Gastrocnemius medialis (tissue), 4 donors: ENCODE measurements at regions of chr21 and their contacts with region 1.

Region 1: GRCh38 chr21:43775795-43776430 is at the start of gene CSTB:
- DNase-seq: peak; percentile 69 to 71
- ATAC-seq: peak; percentile 91
- H3K4me3 ChIP-seq: peak within 1 kb of the TSS; percentile 76 to 99 (median 91)
- H3K27ac ChIP-seq: peak within 1 kb of the TSS; percentile 75 to 94 (median 86)
- H3K4me1 ChIP-seq: peaks cover 14 to 15% of the 10 kb centered on the region in 2 donors
- H3K27me3 ChIP-seq: no peaks in the 10 kb centered on the region
- CTCF ChIP-seq: no peak
- POLR2A ChIP-seq: peak; percentile 61 to 70
- total RNA-seq, gene CSTB: 1.3 to 5.9 (median 5.2) TPM

Region 2: GRCh38 chr21:43728467-43729390 is 47.2 kb before region 1 on chr21:
- in situ Hi-C with region 1: loop called in 1 of 4 experiments (anchors 10 kb)
- intact Hi-C with region 1: no loop called
- DNase-seq: peak; percentile 83 to 87
- ATAC-seq: peak; percentile 76
- H3K4me3 ChIP-seq: peak overlapping the region; percentile 44 to 62 (median 58)
- H3K27ac ChIP-seq: peak overlapping the region; percentile 73 to 79 (median 78)
- H3K4me1 ChIP-seq: peaks cover 50 to 55% of the 10 kb centered on the region in 2 donors
- H3K27me3 ChIP-seq: no peaks in the 10 kb centered on the region
- CTCF ChIP-seq: peak in 2 of 5 experiments; percentile 43 to 51
- POLR2A ChIP-seq: peak; percentile 62 to 65

Region 3: DNA sequence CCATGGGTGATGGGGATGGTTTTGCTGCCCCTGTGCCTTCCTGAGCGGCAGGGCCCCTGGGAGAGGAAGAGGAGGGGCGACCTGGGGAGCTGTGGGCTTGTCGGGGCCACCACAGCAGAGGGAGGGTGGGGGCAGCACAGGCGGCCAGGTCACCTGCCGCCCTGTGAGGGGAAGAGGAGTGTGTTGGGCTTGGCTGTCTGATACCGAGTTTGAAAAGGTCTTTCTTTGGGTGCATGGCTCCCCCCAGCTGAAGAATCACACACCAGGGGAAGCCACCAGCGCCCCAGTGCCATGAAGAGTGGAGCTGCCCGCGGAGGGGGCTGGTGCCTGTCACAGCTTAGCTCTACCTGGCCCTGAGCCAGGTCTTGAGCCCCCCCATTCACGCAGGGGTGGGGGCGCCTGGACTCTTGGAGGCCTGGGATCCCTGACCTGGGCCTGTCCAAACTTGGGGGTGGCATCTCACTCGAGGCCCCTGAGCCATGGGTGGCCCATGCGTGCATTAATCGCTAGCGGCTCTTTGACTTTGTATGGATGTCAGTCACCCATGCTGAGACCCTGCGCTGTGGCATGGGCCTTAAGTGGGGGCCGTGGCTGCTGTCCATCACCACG is 26.2 kb before region 1 on chr21:
- in situ Hi-C with region 1: no loop called
- intact Hi-C with region 1: no loop called
- DNase-seq: no peak
- ATAC-seq: no peak
- H3K4me3 ChIP-seq: no peak overlapping the region
- H3K27ac ChIP-seq: no peak overlapping the region
- H3K4me1 ChIP-seq: no peaks in the 10 kb centered on the region
- H3K27me3 ChIP-seq: no peaks in the 10 kb centered on the region
- CTCF ChIP-seq: no peak
- POLR2A ChIP-seq: no peak